Adrenal gland (tissue), 19 donors: ENCODE measurements at regions of chr2 and their contacts with region 1.

Region 1: DNA sequence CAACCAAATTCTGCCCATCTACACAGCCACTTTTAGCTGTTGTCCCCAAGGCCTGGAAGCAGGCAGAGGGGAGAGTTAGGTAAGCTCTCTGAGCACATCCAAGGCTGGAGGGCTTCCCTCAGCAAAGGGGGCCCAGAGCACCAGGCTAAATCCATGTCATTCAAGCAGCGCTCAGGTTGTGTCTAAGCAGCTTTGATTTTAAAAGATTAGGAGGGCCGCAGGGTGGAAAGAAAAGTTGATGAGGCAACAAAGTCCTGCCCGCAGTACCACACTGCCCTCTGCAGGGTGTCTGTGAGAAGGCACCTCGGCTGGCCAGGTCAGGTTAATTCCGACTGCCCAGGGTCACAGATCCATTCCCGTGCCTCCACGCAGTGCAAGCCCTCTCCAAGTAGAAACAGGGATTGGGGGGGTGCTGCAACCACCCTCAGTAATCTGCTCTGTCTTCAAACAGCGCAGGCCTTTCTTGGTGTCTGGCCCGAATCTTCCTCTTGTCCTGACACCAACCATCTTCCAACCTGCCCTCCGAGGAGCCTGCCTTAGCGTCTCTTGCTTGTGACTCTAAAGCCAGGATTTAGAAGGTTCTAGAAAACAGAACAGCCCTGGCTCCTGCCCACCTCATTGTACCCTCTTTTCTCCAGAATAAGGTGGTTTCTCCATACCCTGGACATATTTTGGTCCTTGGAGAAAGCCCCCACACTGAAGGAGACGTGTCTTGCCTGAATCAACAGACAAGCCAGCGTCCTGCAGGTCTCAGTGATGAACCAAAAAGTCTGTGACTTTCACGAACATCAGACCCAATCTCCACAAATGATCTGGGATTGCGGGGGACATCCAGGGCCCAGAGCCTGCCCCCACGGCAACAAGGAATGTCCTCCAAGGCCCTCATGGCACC is 289.2 kb downstream of the TNS1 start:
- DNase-seq: peak; percentile 76 to 92 (median 84)
- H3K4me3 ChIP-seq: no peak overlapping the region
- H3K27ac ChIP-seq: peak overlapping the region in 2 of 5 donors; percentile 55 to 71
- H3K4me1 ChIP-seq: peaks cover 0 to 40% of the 10 kb centered on the region in 2 donors
- H3K27me3 ChIP-seq: no peaks in the 10 kb centered on the region
- CTCF ChIP-seq: peak; percentile 92 to 99 (median 96)
- POLR2A ChIP-seq: no peak

Region 2: GRCh38 chr2:216692636-216693413 is 1020.8 kb before region 1 on chr2:
- intact Hi-C with region 1: loop called in 1 of 2 experiments (anchors 5 kb)
- DNase-seq: peak; percentile 64 to 90 (median 73)
- H3K4me3 ChIP-seq: peak overlapping the region in 2 of 4 donors; percentile 24 to 59
- H3K27ac ChIP-seq: peak overlapping the region in 4 of 5 donors; percentile 51 to 92 (median 74)
- H3K4me1 ChIP-seq: peaks cover 14 to 29% of the 10 kb centered on the region in 2 donors
- H3K27me3 ChIP-seq: no peaks in the 10 kb centered on the region
- CTCF ChIP-seq: no peak
- POLR2A ChIP-seq: no peak

Region 3: DNA sequence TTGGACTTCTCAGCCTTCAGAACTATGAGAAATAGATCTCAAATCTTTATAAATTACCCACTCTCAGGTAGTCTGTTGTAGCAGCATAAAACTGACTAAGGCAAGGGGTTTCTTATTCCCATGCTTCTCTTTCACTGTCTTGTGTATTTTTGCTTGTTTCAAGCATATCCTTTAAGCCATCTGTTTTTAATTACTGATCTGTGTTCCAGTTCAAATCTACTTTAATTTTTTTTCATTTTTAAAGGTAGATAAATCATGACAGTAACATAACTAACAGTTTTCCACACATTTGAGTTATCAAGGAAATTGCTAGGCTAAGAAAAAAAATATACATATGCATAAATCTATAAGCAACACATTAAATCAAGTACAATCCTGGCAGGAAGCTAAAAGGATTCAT is 535.9 kb before region 1 on chr2:
- intact Hi-C with region 1: loop called in 1 of 2 experiments (anchors 10 kb)
- DNase-seq: no peak
- H3K4me3 ChIP-seq: no peak overlapping the region
- H3K27ac ChIP-seq: no peak overlapping the region
- H3K4me1 ChIP-seq: peaks cover 0 to 6% of the 10 kb centered on the region in 2 donors
- H3K27me3 ChIP-seq: no peaks in the 10 kb centered on the region
- CTCF ChIP-seq: no peak
- POLR2A ChIP-seq: no peak

Region 4: DNA sequence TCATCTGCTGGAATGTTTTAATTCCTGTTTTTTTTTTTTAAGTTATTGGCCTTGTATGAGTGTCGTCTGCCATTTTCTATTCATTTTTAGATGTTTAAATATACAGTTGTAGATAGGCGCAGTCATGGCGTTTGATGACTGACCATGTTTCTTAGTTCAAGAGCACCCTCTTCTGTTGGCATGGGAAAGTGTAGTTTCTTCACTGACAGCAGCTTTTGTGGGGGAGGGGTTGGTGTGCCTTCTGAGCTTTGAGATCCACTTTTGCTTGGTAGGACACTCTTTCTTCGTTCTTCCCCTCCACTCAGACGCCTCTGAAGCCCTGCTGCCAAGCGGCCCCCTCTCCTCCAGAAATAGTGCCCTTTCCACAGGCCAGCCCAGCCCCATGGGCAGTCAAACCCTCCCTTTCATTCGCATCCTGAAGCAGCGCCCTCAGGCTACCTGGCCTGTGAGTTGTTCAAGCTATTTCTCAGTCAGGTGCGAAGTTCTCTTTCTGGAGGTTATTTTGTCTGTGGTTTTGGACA is 202.8 kb before region 1 on chr2:
- intact Hi-C with region 1: loop called in 1 of 2 experiments (anchors 5 kb)
- DNase-seq: peak; percentile 66 to 92 (median 76)
- H3K4me3 ChIP-seq: no peak overlapping the region
- H3K27ac ChIP-seq: peak overlapping the region in 2 of 5 donors; percentile 2 to 48
- H3K4me1 ChIP-seq: peaks cover 10 to 40% of the 10 kb centered on the region in 2 donors
- H3K27me3 ChIP-seq: no peaks in the 10 kb centered on the region
- CTCF ChIP-seq: peak; percentile 49 to 96 (median 88)
- POLR2A ChIP-seq: no peak

Region 5: DNA sequence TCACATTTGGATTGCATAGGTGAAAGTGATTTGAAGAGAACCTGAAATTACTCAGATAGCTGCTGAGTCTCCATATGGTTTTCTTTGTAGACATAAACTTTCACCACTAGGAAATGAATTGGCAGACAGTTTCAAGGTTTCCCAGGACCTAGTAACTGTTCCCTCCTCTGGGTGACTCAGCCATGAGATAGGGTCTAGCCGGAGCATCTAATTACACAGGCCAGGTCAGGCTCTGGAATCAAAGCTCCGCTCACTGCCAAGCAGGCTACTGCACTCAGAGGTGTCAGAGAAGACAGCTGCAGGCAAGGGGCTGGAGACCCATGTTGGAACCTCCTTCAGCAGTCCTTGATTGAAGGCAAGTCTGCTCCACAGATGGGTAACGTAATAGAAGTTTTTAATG is 140.1 kb before region 1 on chr2:
- intact Hi-C with region 1: no loop called
- DNase-seq: peak; percentile 29 to 71 (median 51)
- H3K4me3 ChIP-seq: no peak overlapping the region
- H3K27ac ChIP-seq: no peak overlapping the region
- H3K4me1 ChIP-seq: no peaks in the 10 kb centered on the region
- H3K27me3 ChIP-seq: no peaks in the 10 kb centered on the region
- CTCF ChIP-seq: peak in 3 of 6 experiments; percentile 13 to 27 (median 19)
- POLR2A ChIP-seq: no peak

Region 6: DNA sequence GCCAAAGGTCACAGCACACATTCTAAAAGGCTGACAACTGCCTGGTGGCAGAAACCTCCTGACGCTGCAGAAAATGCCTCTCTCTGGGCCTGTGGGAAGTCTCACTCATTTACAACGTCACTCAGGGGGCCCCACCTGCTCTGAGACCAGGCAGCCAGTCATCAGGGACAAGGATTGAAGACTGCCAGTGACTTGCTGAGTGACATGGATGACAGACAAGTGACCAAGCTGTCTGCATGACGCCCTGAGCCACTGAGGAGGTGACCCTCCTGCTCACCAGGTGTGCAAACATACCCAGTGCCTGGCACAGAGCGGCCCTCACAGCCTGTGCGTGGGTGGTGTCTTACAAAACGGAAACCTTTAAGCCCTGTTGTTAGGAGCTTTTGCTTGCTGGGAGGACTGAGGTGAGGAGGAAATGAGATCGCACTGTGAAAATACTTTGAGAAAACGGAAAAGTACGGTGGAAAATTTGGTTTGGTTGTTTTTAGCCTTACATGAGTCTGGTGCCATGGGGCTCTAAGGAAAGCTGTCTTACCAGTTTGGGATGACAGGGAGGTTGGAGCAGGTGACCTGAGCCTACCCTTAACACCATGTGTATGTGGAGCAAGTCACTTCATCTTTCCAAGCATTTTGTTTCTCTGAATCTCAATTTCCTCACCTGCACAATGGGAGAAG is 103.1 kb before region 1 on chr2:
- intact Hi-C with region 1: no loop called
- DNase-seq: no peak
- H3K4me3 ChIP-seq: no peak overlapping the region
- H3K27ac ChIP-seq: no peak overlapping the region
- H3K4me1 ChIP-seq: peaks cover 0 to 13% of the 10 kb centered on the region in 2 donors
- H3K27me3 ChIP-seq: no peaks in the 10 kb centered on the region
- CTCF ChIP-seq: no peak
- POLR2A ChIP-seq: no peak

Region 7: GRCh38 chr2:217666338-217666737 is 47.3 kb before region 1 on chr2:
- intact Hi-C with region 1: no loop called
- DNase-seq: no peak
- H3K4me3 ChIP-seq: no peak overlapping the region
- H3K27ac ChIP-seq: no peak overlapping the region
- H3K4me1 ChIP-seq: peaks cover 0 to 8% of the 10 kb centered on the region in 2 donors
- H3K27me3 ChIP-seq: no peaks in the 10 kb centered on the region
- CTCF ChIP-seq: no peak
- POLR2A ChIP-seq: no peak